ENCODE measurements at regions of chr3 and their contacts with region 1.

Region 1: GRCh38 chr3:117427081-117427480 is 717.5 kb downstream of the TUSC7 start:
- DNase-seq: no peak
- H3K4me3 ChIP-seq: no peak overlapping the region
- H3K27ac ChIP-seq: no peak overlapping the region
- H3K4me1 ChIP-seq: no peaks in the 10 kb centered on the region
- H3K27me3 ChIP-seq: no peaks in the 10 kb centered on the region
- CTCF ChIP-seq: no peak
- POLR2A ChIP-seq: no peak

Region 2: DNA sequence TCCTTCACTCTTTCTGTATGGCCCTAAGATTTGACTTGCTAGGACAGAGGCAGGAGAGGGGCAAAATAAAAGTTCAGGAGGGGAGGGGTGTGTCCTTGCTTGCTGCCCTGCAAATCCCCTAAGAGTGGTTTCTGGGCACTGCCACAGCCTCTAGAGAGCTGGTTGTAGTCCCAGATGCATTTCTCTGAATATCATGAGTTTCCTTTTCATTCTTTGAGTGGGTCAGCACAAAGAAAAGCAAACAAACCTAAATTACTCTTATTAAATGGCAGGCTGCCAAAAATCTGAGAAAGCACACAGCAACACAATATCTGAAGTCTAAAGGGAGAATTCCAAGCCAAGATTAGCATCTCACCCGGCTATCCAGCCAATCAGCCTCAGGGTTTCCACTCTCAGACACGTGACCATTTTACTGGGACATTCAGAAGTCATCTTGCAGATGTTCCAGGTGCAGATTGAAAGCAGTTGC is 201.8 kb after region 1 on chr3:
- intact Hi-C with region 1: no loop called
- DNase-seq: no peak
- H3K4me3 ChIP-seq: no peak overlapping the region
- H3K27ac ChIP-seq: no peak overlapping the region
- H3K4me1 ChIP-seq: no peaks in the 10 kb centered on the region
- H3K27me3 ChIP-seq: no peaks in the 10 kb centered on the region
- CTCF ChIP-seq: no peak
- POLR2A ChIP-seq: no peak

Region 3: GRCh38 chr3:117665296-117665695 is 238.2 kb after region 1 on chr3:
- intact Hi-C with region 1: loop called (anchors 5 kb)
- DNase-seq: no peak
- H3K4me3 ChIP-seq: no peak overlapping the region
- H3K27ac ChIP-seq: no peak overlapping the region
- H3K4me1 ChIP-seq: no peaks in the 10 kb centered on the region
- H3K27me3 ChIP-seq: no peaks in the 10 kb centered on the region
- CTCF ChIP-seq: no peak
- POLR2A ChIP-seq: no peak

Measured in testis (tissue), 5 donors.